Transverse colon (tissue), 4 donors: ENCODE measurements at regions of chr18 and their contacts with region 1.

Region 1: GRCh38 chr18:28127763-28128663 is 48.9 kb downstream of the CDH2 start:
- DNase-seq: no peak
- H3K4me3 ChIP-seq: no peak overlapping the region
- H3K27ac ChIP-seq: no peak overlapping the region
- H3K4me1 ChIP-seq: no peaks in the 10 kb centered on the region
- H3K27me3 ChIP-seq: no peaks in the 10 kb centered on the region
- CTCF ChIP-seq: no peak
- EP300 ChIP-seq: no peak
- POLR2A ChIP-seq: no peak

Region 2: GRCh38 chr18:28032177-28032576 is 95.8 kb before region 1 on chr18:
- in situ Hi-C with region 1: no loop called
- intact Hi-C with region 1: no loop called
- DNase-seq: no peak
- H3K4me3 ChIP-seq: no peak overlapping the region
- H3K27ac ChIP-seq: no peak overlapping the region
- H3K4me1 ChIP-seq: no peaks in the 10 kb centered on the region
- H3K27me3 ChIP-seq: no peaks in the 10 kb centered on the region
- CTCF ChIP-seq: no peak
- EP300 ChIP-seq: no peak
- POLR2A ChIP-seq: no peak

Region 3: GRCh38 chr18:28189400-28190239 is 61.6 kb after region 1 on chr18:
- in situ Hi-C with region 1: loop called in 1 of 4 experiments (anchors 10 kb)
- intact Hi-C with region 1: no loop called
- DNase-seq: no peak
- H3K4me3 ChIP-seq: no peak overlapping the region
- H3K27ac ChIP-seq: no peak overlapping the region
- H3K4me1 ChIP-seq: no peaks in the 10 kb centered on the region
- H3K27me3 ChIP-seq: no peaks in the 10 kb centered on the region
- CTCF ChIP-seq: peak; percentile 16 to 56 (median 41)
- EP300 ChIP-seq: no peak
- POLR2A ChIP-seq: no peak